ENCODE measurements at regions of chr12 and their contacts with region 1.

Region 1: DNA sequence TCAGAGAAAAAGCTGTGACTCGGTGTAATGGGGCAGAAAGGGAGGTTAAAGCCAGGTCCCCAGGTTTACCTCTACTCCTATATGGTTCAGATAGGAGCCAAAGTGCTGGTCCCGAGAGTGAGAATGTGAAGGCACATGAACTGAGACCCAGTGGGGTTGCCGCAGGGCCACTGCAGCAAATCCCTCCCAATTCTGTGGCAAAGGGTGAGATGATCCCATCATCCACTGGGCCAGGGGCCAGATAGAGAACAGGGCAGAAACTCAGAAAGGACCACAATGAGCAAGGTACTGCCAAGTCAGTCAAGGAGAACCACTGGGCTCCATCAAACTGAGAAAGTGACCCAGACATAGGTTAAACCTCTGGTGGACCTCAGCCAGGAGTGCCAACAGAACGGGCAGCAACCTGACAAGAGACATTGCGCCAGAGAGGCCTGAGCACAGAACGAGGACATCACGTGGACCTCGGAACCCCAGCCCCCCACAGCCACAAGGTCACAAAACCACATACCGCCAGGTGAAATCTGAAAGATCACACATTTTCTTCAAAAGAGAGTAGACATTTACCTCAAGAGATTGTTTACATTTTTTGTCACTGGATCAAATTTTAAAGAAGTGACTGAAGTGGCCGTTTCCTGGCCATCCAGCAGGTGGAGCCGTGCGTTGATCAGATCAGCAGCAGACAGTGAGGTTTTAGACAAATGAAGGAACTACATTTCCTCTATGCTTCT is 20.5 kb upstream of the ITPR2 start:
- DNase-seq: peak; percentile 75
- CTCF ChIP-seq: peak; percentile 88

Region 2: GRCh38 chr12:26863502-26863901 is 10.0 kb after region 1 on chr12:
- CTCF ChIA-PET with region 1: interaction called, 24 read pairs
- POLR2A ChIA-PET with region 1: no interaction called
- DNase-seq: no peak
- CTCF ChIP-seq: no peak

Region 3: GRCh38 chr12:26870491-26871419 is 17.3 kb after region 1 on chr12:
- CTCF ChIA-PET with region 1: interaction called, 24 read pairs
- POLR2A ChIA-PET with region 1: no interaction called
- DNase-seq: no peak
- CTCF ChIP-seq: no peak

Region 4: DNA sequence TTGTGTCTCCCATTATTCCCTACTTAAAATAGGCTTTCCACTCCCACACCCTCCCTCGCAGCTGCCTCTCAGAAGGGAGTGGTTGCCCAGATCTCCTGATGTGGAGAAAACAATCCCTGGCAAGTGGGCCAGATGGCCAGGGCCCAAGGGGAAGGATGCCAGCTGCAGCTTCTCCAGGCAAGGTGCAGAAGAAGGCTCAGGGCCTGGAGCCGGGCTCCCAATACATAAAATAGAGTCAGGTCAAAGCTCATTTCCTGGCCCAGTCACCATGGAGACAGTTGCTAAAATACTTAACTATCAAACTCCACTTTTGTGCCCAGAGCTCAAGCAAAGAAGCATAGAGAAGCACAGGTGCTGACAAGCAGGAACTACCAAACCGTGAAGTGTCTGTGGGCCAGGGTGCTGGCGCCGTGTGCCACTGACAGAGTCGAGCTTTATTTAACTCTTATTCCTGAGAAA is 25.2 kb after region 1 on chr12:
- CTCF ChIA-PET with region 1: interaction called, 81 read pairs
- POLR2A ChIA-PET with region 1: no interaction called
- DNase-seq: peak; percentile 56
- CTCF ChIP-seq: no peak

Region 5: GRCh38 chr12:26891704-26892103 is 38.2 kb after region 1 on chr12:
- CTCF ChIA-PET with region 1: interaction called, 81 read pairs
- POLR2A ChIA-PET with region 1: no interaction called
- DNase-seq: no peak
- CTCF ChIP-seq: no peak

Measured in GM10248 (cell line).